ENCODE measurements at regions of chr4 and their contacts with region 1.

Region 1: DNA sequence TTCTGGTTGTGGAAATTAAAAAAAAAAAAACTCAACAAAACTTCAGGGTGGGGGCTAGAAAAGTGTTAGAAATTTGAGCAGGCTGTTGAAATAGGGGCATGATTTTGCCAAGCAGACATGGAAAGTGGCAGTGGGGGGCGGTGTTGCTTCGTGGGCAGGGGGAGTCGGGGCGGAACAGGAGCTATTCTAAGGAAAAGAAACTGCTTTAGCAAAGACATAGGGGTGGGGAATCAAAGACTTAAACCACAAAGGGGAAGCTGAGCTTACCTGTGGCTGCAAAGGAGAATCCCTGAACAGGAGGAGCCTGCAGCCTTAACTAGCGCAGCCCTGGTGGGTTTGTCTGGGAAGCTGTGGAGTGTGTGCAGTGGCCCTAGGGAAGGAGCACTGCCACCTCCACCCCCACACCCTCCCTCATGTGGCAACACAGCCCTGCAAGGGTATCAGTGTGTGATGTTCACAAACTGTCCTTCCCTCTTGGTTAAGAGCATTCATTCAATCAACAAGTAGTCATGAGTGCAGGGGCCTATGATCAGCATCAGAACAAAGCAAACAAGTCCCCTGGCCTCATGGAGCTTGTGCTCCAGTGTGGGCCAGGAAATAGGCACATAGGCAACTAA is 20.5 kb downstream of the SEL1L3 start:
- DNase-seq: peak in 7 of 9 donors; percentile 24 to 51 (median 46)
- ATAC-seq: peak; percentile 78
- H3K4me3 ChIP-seq: no peak overlapping the region
- H3K4me3 Mint-ChIP-seq: peak overlapping the region; percentile 1 to 63 (median 40)
- H3K27ac ChIP-seq: no peak overlapping the region
- H3K27ac Mint-ChIP-seq: peak overlapping the region in 4 of 9 donors; percentile 16 to 84 (median 40)
- H3K4me1 ChIP-seq: peaks cover 5 to 14% of the 10 kb centered on the region in 2 donors
- H3K4me1 Mint-ChIP-seq: peaks cover 27 to 55% (median 37%) of the 10 kb centered on the region in 7 donors
- H3K27me3 ChIP-seq: no peaks in the 10 kb centered on the region
- H3K27me3 Mint-ChIP-seq: no peaks in the 10 kb centered on the region

Region 2: DNA sequence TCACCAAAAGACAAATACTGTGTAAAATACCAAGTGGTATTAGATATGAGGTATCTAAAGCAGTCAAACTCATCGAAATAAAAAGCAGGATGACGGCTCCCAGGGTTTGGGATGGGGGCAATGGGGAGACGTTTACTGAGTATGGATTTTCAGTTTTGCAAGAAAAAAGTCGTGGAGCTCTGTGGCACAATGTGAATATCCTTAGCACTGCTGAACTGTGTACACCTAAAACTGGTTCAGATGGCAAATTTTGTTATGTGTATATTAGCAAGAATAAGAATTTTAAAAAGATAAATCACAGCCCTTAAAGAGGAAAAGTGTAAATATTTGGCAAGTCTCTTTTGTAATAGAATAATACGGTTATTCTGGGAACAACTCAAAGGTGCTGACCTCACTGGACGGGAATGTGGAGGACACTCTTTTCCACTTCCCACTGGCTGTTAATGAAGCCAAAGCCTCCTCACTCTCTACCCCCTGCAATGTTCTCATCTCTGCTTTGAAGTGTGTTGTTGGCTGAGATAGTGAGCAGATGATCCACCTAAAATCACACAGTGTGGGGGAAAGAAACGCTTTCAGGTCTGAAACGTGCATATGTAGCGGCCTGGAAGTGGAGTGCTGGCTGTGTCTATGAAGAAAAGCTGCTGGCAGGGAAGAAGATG is 28.8 kb before region 1 on chr4:
- CTCF ChIA-PET with region 1: no interaction called
- POLR2A ChIA-PET with region 1: no interaction called
- intact Hi-C with region 1: no loop called
- DNase-seq: no peak
- ATAC-seq: no peak
- H3K4me3 ChIP-seq: no peak overlapping the region
- H3K4me3 Mint-ChIP-seq: no peak overlapping the region
- H3K27ac ChIP-seq: no peak overlapping the region
- H3K27ac Mint-ChIP-seq: peak overlapping the region in 1 of 9 donors; percentile 66
- H3K4me1 ChIP-seq: no peaks in the 10 kb centered on the region
- H3K4me1 Mint-ChIP-seq: peaks cover 0 to 4% (median 0%) of the 10 kb centered on the region in 7 donors
- H3K27me3 ChIP-seq: no peaks in the 10 kb centered on the region
- H3K27me3 Mint-ChIP-seq: no peaks in the 10 kb centered on the region

Region 3: GRCh38 chr4:26028793-26029567 is 186.6 kb after region 1 on chr4:
- CTCF ChIA-PET with region 1: no interaction called
- POLR2A ChIA-PET with region 1: no interaction called
- intact Hi-C with region 1: no loop called
- DNase-seq: peak in 8 of 9 donors; percentile 11 to 82 (median 18)
- ATAC-seq: peak; percentile 80
- H3K4me3 ChIP-seq: no peak overlapping the region
- H3K4me3 Mint-ChIP-seq: peak overlapping the region in 2 of 10 donors; percentile 12 to 39
- H3K27ac ChIP-seq: no peak overlapping the region
- H3K27ac Mint-ChIP-seq: no peak overlapping the region
- H3K4me1 ChIP-seq: no peaks in the 10 kb centered on the region
- H3K4me1 Mint-ChIP-seq: peaks cover 0 to 10% (median 0%) of the 10 kb centered on the region in 7 donors
- H3K27me3 ChIP-seq: peaks cover 0 to 4% of the 10 kb centered on the region in 2 donors
- H3K27me3 Mint-ChIP-seq: peaks cover 0 to 27% (median 16%) of the 10 kb centered on the region in 5 donors

Region 4: DNA sequence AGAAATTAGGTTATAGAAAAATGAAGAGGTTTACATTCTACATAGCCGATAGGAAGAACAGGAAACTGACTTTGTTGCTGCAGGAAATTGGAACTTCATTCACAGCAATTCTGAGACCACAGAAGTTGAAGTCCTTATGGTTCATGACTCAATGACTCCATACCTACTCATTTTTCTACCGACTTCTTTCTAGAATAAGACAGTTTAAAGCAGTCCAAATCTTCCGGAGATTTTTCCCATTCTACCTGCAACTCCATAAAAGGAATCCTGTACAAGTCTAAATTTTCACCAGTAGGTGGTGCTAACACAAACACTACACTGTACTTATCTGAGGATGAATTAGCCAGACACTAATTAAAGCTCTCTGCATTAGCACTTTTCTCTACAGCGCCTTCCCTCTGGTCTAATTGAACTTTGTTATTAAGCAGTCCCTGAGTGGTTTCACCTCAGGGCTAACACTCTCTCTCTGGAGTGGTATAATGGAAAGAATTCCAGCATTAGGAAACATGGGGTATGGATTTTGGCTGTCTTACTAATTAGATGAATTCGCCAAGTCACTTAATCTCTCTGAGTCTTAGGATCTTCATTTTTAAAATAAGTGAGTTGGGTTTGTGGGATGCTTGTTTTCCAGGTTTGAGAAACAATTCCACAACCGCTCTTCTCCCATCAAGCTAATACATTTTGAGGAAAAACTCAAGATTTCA is 239.6 kb after region 1 on chr4:
- CTCF ChIA-PET with region 1: no interaction called
- POLR2A ChIA-PET with region 1: no interaction called
- intact Hi-C with region 1: loop called in 1 of 2 experiments (anchors 1 kb)
- DNase-seq: peak in 5 of 9 donors; percentile 16 to 29 (median 22)
- ATAC-seq: peak; percentile 66
- H3K4me3 ChIP-seq: no peak overlapping the region
- H3K4me3 Mint-ChIP-seq: peak overlapping the region in 1 of 10 donors; percentile 49
- H3K27ac ChIP-seq: no peak overlapping the region
- H3K27ac Mint-ChIP-seq: peak overlapping the region in 1 of 9 donors; percentile 73
- H3K4me1 ChIP-seq: no peaks in the 10 kb centered on the region
- H3K4me1 Mint-ChIP-seq: peaks cover 0 to 65% (median 6%) of the 10 kb centered on the region in 7 donors
- H3K27me3 ChIP-seq: no peaks in the 10 kb centered on the region
- H3K27me3 Mint-ChIP-seq: peaks cover 0 to 38% (median 7%) of the 10 kb centered on the region in 5 donors